ENCODE measurements at regions of chr2 and their contacts with region 1.

Region 1: DNA sequence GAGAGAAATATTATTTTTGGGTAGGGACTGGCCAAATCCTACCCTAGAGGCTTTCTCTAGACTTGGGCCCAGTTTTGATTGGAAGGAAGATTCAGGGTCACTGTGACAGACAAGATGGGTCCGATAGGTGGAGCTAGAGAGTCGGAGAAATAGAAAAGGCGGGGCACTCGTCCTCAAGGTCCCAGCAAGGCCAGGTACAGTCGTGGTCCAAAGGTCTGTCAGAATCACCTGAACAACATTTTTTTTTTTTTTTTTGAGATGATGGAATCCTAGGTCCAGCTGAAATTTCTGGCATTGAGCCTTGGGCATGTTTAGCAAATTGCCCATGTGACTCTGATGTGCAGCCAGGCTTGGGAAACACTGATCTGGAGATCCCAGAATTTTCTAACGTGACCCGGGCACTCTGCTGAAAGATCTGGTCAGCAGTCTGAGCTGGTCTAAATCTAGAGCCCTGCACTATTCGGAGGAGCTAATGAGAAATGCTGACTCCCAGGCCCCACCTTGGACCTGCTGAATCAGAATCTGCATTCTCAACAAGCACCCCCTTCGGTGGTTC is 23.0 kb upstream of the NTSR2 start:
- DNase-seq: peak; percentile 55 to 80
- H3K4me3 ChIP-seq: no peak overlapping the region
- H3K4me1 ChIP-seq: peaks cover 4% of the 10 kb centered on the region; the same call in 1 of the 2 replicates
- H3K27me3 ChIP-seq: no peaks in the 10 kb centered on the region

Region 2: DNA sequence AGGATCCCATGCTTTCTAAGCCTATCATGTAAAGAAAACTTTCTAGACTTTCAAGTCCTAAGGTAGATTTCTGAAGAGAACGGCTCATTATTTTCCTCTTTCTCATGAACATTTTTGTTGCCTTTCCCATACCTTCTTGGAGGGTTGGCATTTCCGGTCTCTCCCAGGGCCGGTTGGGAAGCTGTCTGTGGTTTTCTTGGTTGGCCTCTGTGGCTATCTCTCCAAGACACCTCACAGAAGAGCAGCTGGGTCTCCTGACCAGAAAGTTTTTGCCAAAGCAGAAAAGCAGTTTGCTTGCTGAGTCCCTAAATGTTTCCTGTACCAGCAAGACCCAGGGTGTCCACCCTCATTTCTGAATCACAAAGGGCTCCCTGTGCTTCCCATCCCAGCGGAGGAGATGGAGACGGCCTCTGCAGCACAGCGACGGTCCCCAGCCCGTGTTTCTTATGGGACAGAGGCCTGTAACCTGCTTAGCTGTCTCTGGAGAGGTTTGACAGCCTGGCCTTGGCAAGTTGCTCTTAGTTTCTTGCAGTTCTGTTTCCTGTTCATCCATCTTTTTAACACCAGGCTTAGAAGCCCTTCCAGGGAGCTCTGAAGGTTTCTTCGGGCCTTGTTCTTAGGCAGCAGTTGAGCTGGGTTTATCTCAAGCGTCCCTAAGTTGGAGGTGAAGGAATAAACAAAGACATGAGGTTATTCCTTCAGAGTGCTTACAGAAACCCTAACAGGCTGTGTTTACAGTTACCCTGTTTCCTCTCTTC is 119.4 kb before region 1 on chr2:
- in situ Hi-C with region 1: no loop called
- DNase-seq: no peak
- H3K4me3 ChIP-seq: no peak overlapping the region
- H3K4me1 ChIP-seq: no peaks in the 10 kb centered on the region
- H3K27me3 ChIP-seq: no peaks in the 10 kb centered on the region

Region 3: DNA sequence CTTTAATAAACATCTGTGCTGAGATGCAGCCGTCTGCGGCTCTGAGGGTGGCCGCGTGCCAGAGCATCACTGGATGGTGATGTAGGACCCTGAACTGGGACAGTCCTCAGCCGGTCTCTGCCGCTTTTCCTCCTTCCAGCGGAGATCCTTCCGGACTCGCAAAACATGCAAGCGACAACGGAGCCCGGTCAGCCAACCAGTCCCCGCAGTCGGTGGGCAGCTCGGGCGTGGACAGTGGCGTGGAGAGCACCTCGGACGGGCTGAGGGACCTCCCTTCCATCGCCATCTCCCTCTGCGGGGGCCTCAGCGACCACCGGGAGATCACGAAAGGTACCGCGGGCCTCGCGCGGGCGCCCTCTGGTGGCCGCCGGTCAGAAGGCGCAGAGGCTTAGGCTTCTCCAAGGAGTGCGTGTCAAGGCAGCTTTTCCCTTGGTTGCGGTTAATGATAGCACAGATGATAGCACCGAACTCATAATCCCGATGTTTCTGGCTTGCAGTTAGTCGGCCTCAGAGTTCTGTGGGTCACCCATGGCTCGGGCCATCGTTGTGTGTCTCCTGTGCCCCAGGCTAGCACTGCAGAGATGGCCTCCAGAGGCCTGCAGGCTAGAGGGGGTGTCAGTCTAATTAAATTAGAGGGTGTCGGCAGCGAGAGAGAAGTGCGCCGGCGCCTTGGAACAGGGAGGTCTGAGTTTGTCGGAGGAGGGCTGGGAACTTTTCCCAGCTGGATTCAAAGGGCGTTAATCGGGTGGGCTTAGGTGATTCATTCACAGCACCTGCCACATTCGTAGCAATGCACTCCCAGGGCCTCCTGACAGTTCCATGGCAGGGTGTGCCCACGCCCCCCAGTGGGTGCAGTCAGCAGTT is 91.9 kb after region 1 on chr2:
- in situ Hi-C with region 1: loop called (anchors 5 kb)
- DNase-seq: peak; percentile 16 to 69
- H3K4me3 ChIP-seq: no peak overlapping the region
- H3K4me1 ChIP-seq: no peaks in the 10 kb centered on the region; the same call in 1 of the 2 replicates
- H3K27me3 ChIP-seq: no peaks in the 10 kb centered on the region

Region 4: GRCh38 chr2:12347066-12347493 is 654.0 kb after region 1 on chr2:
- in situ Hi-C with region 1: no loop called
- DNase-seq: no peak
- H3K4me3 ChIP-seq: no peak overlapping the region
- H3K4me1 ChIP-seq: no peaks in the 10 kb centered on the region
- H3K27me3 ChIP-seq: no peaks in the 10 kb centered on the region